WTC11 (cell line): ENCODE measurements at regions of chr6 and their contacts with region 1.

Region 1: GRCh38 chr6:31068669-31069340 is 43.6 kb downstream of the C6orf15 start:
- DNase-seq: peak; percentile 84
- ATAC-seq: peak; percentile 62
- H3K4me3 Mint-ChIP-seq: no peak overlapping the region
- H3K27ac Mint-ChIP-seq: 0 out of 2 replicates have a peak overlapping the region, but pooled peaks have one; percentile 42
- H3K4me1 Mint-ChIP-seq: peaks cover 25% of the 10 kb centered on the region
- H3K27me3 Mint-ChIP-seq: no peaks in the 10 kb centered on the region
- CTCF ChIP-seq: peak; percentile 90

Region 2: GRCh38 chr6:30883685-30884520 is 184.9 kb before region 1 on chr6 and contains the start of gene DDR1:
- CTCF ChIA-PET with region 1: interaction called, 30 read pairs
- POLR2A ChIA-PET with region 1: no interaction called
- DNase-seq: peak; percentile 58
- ATAC-seq: peak; percentile 4
- H3K4me3 Mint-ChIP-seq: peak within 1 kb of the TSS; percentile 93
- H3K27ac Mint-ChIP-seq: peak within 1 kb of the TSS; percentile 99
- H3K4me1 Mint-ChIP-seq: peaks cover 71% of the 10 kb centered on the region
- H3K27me3 Mint-ChIP-seq: no peaks in the 10 kb centered on the region
- CTCF ChIP-seq: no peak
- total RNA-seq, gene DDR1: 195 to 230 TPM (median 203 TPM) in 3 replicates

Region 3: DNA sequence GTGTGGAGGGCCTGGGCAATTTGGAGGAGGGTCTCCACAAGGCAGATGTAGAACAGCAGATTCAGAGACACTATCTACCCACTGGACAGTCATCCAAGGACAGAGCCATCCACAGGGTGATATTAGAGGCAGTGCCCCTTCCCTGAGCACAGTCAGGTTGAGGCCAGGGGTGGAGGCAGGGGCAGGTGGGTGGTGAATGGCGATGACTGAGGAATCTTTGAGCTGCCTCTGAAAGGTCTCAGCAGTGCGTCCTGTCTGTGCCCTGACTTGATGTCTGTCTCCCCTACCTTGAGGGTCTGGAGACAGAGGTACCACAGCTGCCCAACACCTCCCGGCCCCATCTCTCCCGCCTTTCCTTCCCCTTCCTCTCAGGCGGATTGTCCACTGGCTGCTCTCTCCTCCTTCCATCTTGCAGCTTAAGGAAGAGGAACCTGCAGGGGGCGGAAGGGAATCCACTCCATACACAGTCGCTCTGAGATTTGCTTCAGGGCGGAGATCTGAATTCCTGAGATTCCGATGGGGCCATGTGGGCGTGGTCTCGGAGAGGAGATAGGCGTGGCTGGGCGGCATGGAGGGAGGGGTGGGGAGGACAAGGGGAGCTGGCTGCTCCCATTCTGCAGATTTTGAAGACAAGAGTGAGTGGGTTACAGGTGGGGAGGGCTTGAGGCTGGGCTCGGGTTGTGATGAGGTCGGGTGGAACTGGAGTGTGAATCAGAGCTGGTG is 126.3 kb before region 1 on chr6:
- CTCF ChIA-PET with region 1: interaction called, 50 read pairs
- POLR2A ChIA-PET with region 1: no interaction called
- DNase-seq: peak; percentile 98
- ATAC-seq: peak; percentile 93
- H3K4me3 Mint-ChIP-seq: peak overlapping the region; percentile 17; the same call in 1 of the 2 replicates
- H3K27ac Mint-ChIP-seq: peak overlapping the region; percentile 83
- H3K4me1 Mint-ChIP-seq: peaks cover 44% of the 10 kb centered on the region
- H3K27me3 Mint-ChIP-seq: no peaks in the 10 kb centered on the region; the same call in 1 of the 2 replicates
- CTCF ChIP-seq: peak; percentile 36; the same call in 1 of the 2 replicates

Region 4: DNA sequence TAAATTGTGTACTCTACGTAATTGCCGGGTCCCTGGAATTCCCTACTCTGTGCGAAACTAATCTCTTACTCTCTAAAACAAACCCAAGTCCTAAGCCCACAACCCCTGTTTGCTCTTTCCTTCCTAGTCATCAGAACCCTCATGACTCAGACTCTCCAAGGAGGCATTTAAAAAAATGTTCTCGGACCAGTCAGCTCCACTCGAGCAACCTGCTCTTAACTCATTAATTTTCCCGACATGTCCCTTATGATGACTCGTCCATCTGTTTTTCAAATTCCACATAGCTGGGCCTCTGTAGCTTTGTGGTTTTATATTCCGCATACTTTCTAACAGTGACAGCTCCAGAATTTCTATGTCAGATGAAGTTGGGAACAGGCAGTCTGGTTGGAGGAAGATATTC is 61.1 kb before region 1 on chr6:
- CTCF ChIA-PET with region 1: interaction called, 12 read pairs
- POLR2A ChIA-PET with region 1: no interaction called
- DNase-seq: no peak
- ATAC-seq: no peak
- H3K4me3 Mint-ChIP-seq: no peak overlapping the region
- H3K27ac Mint-ChIP-seq: no peak overlapping the region
- H3K4me1 Mint-ChIP-seq: no peaks in the 10 kb centered on the region
- H3K27me3 Mint-ChIP-seq: no peaks in the 10 kb centered on the region
- CTCF ChIP-seq: no peak

Region 5: GRCh38 chr6:31058128-31058894 is 10.5 kb before region 1 on chr6:
- CTCF ChIA-PET with region 1: interaction called, 25 read pairs
- POLR2A ChIA-PET with region 1: no interaction called
- DNase-seq: no peak
- ATAC-seq: no peak
- H3K4me3 Mint-ChIP-seq: no peak overlapping the region
- H3K27ac Mint-ChIP-seq: no peak overlapping the region
- H3K4me1 Mint-ChIP-seq: peaks cover 12% of the 10 kb centered on the region
- H3K27me3 Mint-ChIP-seq: peaks cover 3% of the 10 kb centered on the region; the same call in 1 of the 2 replicates
- CTCF ChIP-seq: no peak